Activated T-helper 1 cell treated with anti-CD3 and anti-CD28 coated beads, Interleukin-12 subunit alpha, Interleukin-12 subunit beta, Interleukin-2, Interleukin-4 antibody, amounts not matched to agents 30 ng/mL and 10 ng/mL and 1 ng/mL, durations not matched to agents 14 hours and 24 hours and 36 hours (primary cell): ENCODE measurements at regions of chr19 and their contacts with region 1.

Region 1: GRCh38 chr19:29941828-29942403 is at the start of gene URI1:
- DNase-seq: peak; percentile 93
- H3K4me3 Mint-ChIP-seq: peak within 1 kb of the TSS; percentile 97
- H3K27ac Mint-ChIP-seq: peak within 1 kb of the TSS; percentile 96
- H3K4me1 Mint-ChIP-seq: peaks cover 48% of the 10 kb centered on the region
- H3K27me3 Mint-ChIP-seq: peaks cover 2% of the 10 kb centered on the region
- total RNA-seq, gene URI1: 62.9 and 67.6 TPM in 2 replicates

Region 2: GRCh38 chr19:29636553-29637360 is 305.2 kb before region 1 on chr19:
- intact Hi-C with region 1: no loop called
- DNase-seq: no peak
- H3K4me3 Mint-ChIP-seq: no peak overlapping the region
- H3K27ac Mint-ChIP-seq: no peak overlapping the region
- H3K4me1 Mint-ChIP-seq: no peaks in the 10 kb centered on the region
- H3K27me3 Mint-ChIP-seq: peaks cover 4% of the 10 kb centered on the region

Region 3: GRCh38 chr19:29811125-29812079 is 130.5 kb before region 1 on chr19 and contains the start of gene CCNE1:
- intact Hi-C with region 1: loop called (anchors 1 kb)
- DNase-seq: peak; percentile 92
- H3K4me3 Mint-ChIP-seq: peak within 1 kb of the TSS; percentile 97
- H3K27ac Mint-ChIP-seq: peak within 1 kb of the TSS; percentile 92
- H3K4me1 Mint-ChIP-seq: peaks cover 38% of the 10 kb centered on the region
- H3K27me3 Mint-ChIP-seq: no peaks in the 10 kb centered on the region
- total RNA-seq, gene CCNE1: 55.1 and 58.4 TPM in 2 replicates

Region 4: DNA sequence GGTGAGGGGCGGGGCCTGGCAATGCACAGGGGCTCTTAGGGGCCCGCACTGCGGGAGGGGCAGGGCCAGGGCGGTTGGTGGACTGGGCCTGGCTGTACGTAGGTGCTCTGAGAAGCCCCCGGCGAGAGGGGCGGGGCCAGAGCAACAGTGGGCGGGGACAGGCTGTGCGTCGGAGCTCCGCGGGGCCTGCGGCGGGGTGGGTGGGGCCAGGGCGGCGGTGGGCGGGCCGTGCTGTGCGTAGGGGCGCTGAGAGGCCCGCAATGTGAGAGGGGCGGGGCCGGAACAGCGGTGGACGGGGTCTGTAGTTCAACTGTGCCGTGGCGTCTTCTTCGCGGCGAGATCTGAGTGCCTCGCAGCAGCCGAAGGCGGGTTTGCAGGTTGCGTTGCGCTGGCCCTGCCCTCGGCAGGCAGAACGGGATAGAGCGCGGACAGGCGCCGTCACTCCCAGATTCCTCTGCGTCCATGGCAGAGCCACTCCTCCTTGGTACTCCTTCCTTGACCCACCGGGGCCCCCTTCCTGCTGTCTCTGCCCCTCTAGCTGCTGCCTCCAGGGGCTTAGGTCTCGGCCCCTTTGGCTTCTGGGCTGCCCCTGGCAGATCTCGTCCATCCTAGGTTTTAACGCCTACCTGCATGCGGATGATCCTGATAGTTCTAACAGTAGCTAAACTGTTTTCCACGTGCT is 96.9 kb before region 1 on chr19:
- intact Hi-C with region 1: loop called (anchors 1 kb)
- DNase-seq: peak; percentile 93
- H3K4me3 Mint-ChIP-seq: peak overlapping the region; percentile 84
- H3K27ac Mint-ChIP-seq: peak overlapping the region; percentile 80
- H3K4me1 Mint-ChIP-seq: peaks cover 30% of the 10 kb centered on the region
- H3K27me3 Mint-ChIP-seq: peaks cover 4% of the 10 kb centered on the region

Region 5: DNA sequence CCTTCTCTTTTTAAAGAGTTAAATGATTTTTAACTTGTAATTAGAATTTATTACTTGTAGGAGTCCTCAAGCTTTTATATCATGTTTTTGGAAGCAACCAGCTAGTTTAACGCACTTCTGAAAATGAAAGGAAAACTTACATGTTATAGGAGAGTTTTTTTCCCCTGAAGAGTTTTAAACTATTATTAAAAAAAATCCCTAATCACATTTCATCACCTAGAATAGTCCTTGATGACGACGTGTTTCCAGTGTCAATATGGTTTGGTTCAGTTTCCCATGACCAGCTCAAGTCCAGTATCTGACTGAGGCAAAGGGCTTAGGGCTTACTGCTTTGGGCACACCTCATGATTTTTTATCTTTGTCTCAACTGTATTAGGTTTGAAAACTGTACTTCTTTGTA is 36.2 kb after region 1 on chr19:
- intact Hi-C with region 1: no loop called
- DNase-seq: no peak
- H3K4me3 Mint-ChIP-seq: no peak overlapping the region
- H3K27ac Mint-ChIP-seq: no peak overlapping the region
- H3K4me1 Mint-ChIP-seq: peaks cover 24% of the 10 kb centered on the region
- H3K27me3 Mint-ChIP-seq: no peaks in the 10 kb centered on the region

Region 6: GRCh38 chr19:30006207-30006606 is 64.3 kb after region 1 on chr19:
- intact Hi-C with region 1: loop called (anchors 5 kb)
- DNase-seq: no peak
- H3K4me3 Mint-ChIP-seq: peak overlapping the region; percentile 62
- H3K27ac Mint-ChIP-seq: peak overlapping the region; percentile 25
- H3K4me1 Mint-ChIP-seq: peaks cover 42% of the 10 kb centered on the region
- H3K27me3 Mint-ChIP-seq: no peaks in the 10 kb centered on the region

Region 7: GRCh38 chr19:30095156-30095555 is 153.2 kb after region 1 on chr19:
- intact Hi-C with region 1: no loop called
- DNase-seq: no peak
- H3K4me3 Mint-ChIP-seq: no peak overlapping the region
- H3K27ac Mint-ChIP-seq: no peak overlapping the region
- H3K4me1 Mint-ChIP-seq: no peaks in the 10 kb centered on the region
- H3K27me3 Mint-ChIP-seq: no peaks in the 10 kb centered on the region

Region 8: GRCh38 chr19:30263830-30264381 is 322.0 kb after region 1 on chr19:
- intact Hi-C with region 1: no loop called
- DNase-seq: no peak
- H3K4me3 Mint-ChIP-seq: no peak overlapping the region
- H3K27ac Mint-ChIP-seq: no peak overlapping the region
- H3K4me1 Mint-ChIP-seq: no peaks in the 10 kb centered on the region
- H3K27me3 Mint-ChIP-seq: no peaks in the 10 kb centered on the region

Region 9: GRCh38 chr19:31214086-31214485 is 1272.2 kb after region 1 on chr19:
- intact Hi-C with region 1: loop called (anchors 10 kb)
- DNase-seq: peak; percentile 90
- H3K4me3 Mint-ChIP-seq: peak overlapping the region; percentile 76
- H3K27ac Mint-ChIP-seq: peak overlapping the region; percentile 91
- H3K4me1 Mint-ChIP-seq: peaks cover 33% of the 10 kb centered on the region
- H3K27me3 Mint-ChIP-seq: no peaks in the 10 kb centered on the region